ENCODE measurements at regions of chr10 and their contacts with region 1.

Region 1: GRCh38 chr10:120423431-120424197 is 33.4 kb upstream of the PLPP4 start:
- DNase-seq: peak; percentile 59
- CTCF ChIP-seq: peak; percentile 97

Region 2: GRCh38 chr10:120403109-120403508 is 20.5 kb before region 1 on chr10:
- CTCF ChIA-PET with region 1: interaction called, 20 read pairs
- POLR2A ChIA-PET with region 1: no interaction called
- DNase-seq: no peak
- CTCF ChIP-seq: no peak

Region 3: DNA sequence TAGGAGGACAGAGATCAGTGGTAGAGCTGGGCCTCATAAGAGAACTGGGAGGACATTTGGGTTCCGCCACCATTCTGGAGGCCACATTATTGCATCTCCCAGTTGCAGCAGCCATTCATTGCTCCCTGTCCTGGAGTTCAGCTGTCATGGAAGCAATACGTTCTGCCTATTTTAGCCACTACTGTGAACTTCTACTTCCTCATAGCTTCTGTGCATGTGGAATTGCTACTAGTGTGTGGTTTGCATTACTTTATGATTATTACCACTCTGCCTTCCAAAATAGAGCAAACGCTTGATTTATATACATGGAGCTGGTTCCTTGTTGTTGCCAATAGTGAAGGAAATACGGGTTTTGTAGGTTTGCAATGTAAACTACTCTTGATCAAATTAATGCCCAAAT is 13.8 kb before region 1 on chr10:
- CTCF ChIA-PET with region 1: interaction called, 23 read pairs
- POLR2A ChIA-PET with region 1: no interaction called
- DNase-seq: no peak
- CTCF ChIP-seq: no peak

Region 4: GRCh38 chr10:120735773-120736371 is 312.3 kb after region 1 on chr10:
- CTCF ChIA-PET with region 1: interaction called, 58 read pairs
- POLR2A ChIA-PET with region 1: no interaction called
- DNase-seq: peak; percentile 22
- CTCF ChIP-seq: peak; percentile 50

Region 5: DNA sequence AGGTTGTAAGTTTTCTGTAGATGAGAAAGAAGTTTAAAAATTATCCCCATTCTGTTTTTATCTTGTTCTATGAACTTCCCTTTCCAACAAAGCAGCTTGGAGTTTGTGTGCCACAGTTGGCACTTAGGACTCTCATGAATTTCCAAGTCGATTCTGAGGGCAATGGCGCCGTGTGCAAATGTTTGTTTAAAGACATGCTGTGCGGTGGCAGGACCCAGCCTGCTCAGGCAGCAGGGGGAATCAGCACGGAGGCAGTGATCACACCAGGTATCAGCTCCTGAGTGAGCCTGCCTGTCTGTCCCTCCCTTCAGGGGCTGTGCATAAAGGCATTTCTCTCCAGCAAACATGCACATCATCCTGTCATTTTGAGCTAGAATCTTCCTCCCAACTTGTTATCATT is 317.8 kb after region 1 on chr10:
- CTCF ChIA-PET with region 1: interaction called, 58 read pairs
- POLR2A ChIA-PET with region 1: no interaction called
- DNase-seq: no peak
- CTCF ChIP-seq: no peak

Region 6: GRCh38 chr10:120861178-120861855 is 437.7 kb after region 1 on chr10:
- CTCF ChIA-PET with region 1: no interaction called
- POLR2A ChIA-PET with region 1: no interaction called
- DNase-seq: no peak
- CTCF ChIP-seq: no peak